AG04450 (cell line): ENCODE measurements at regions of chr2 and their contacts with region 1.

Region 1: DNA sequence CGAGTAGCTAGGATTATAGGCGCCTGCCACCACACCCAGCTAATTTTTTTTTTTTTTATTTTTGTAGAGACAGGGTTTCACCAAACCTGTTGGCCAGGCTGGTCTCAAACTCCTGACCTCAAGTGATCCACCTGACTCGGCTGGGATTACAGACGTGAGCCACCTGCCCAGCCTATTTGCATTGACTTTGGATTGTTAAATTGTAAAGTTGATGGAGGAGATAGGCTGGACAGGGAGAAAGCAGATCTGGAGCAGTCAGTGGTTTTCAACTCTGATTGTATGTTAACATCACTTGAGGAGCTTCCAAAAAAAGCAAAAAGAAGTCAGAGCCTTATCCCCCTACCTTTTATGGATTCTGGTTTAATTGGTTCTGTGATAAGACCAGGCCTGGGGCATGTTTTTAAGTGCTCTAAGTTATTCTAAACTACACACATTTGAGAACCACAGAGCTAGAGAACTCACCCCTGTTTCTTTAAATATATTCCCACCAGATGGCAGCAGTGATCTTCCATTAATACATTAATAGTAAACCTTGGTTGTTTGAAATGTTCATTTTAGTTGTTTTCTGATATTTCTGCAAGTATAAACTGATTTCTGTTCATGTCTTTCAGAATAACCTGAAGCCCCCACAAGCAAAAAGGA is 7.5 kb downstream of the C2orf49 start:
- DNase-seq: no peak
- H3K4me3 ChIP-seq: no peak overlapping the region
- H3K27ac ChIP-seq: no peak overlapping the region
- H3K27me3 ChIP-seq: no peaks in the 10 kb centered on the region
- CTCF ChIP-seq: peak; percentile 52

Region 2: GRCh38 chr2:105231232-105231619 is 113.6 kb before region 1 on chr2:
- CTCF ChIA-PET with region 1: no interaction called
- POLR2A ChIA-PET with region 1: no interaction called
- DNase-seq: no peak
- H3K4me3 ChIP-seq: no peak overlapping the region
- H3K27ac ChIP-seq: no peak overlapping the region
- H3K27me3 ChIP-seq: peaks cover 9% of the 10 kb centered on the region
- CTCF ChIP-seq: no peak

Region 3: GRCh38 chr2:105274046-105274445 is 70.8 kb before region 1 on chr2:
- CTCF ChIA-PET with region 1: no interaction called
- POLR2A ChIA-PET with region 1: no interaction called
- DNase-seq: no peak
- H3K4me3 ChIP-seq: no peak overlapping the region
- H3K27ac ChIP-seq: no peak overlapping the region
- H3K27me3 ChIP-seq: no peaks in the 10 kb centered on the region
- CTCF ChIP-seq: no peak

Region 4: DNA sequence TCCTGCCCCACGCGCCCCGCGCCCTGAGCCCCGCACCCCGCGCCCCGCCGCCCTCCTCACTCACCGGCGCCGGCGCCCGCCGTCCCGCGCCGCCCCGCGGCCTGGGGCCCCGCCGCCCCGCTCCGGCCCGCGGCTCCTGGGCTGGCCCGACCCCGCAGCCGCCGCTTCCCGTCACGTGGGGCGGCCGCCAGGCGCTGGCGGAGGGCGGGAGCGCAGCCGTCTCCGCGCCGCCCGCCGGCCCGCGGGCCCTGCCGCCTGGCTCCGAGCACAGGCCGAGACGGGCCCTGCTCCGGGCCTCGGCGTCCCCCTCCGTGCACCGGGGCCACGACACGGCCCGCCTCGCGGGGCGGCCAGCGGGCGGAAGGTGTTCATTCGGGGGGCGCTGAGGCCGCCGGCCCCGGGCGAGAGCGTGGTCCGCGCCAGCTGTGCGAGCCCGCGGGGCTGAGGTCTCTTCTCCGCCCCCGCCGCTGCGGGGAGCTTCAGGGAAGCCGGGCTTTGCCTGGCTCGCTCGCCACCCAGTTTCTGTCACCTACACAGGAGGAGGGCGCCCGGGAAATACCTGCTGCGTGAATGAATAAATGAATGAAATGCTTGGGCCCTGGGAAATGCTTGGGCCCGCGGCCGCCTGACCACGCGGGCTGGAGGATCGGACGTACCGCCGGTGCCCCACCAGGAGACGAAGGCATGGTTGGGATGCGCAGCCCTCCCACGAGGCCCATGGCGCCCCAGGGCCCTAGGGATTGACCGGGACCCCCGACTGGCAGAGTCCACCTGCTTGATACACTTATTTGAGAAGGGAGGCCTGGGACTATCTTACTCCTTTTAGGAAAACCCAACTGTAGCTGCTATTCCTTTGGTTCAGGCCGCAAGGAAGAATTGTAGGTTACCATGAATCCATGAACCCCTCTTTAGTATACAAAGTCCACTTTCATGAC is 15.0 kb before region 1 on chr2 and contains the start of gene TGFBRAP1:
- CTCF ChIA-PET with region 1: interaction called, 13 read pairs
- POLR2A ChIA-PET with region 1: no interaction called
- DNase-seq: no peak
- H3K4me3 ChIP-seq: peak within 1 kb of the TSS; percentile 84
- H3K27ac ChIP-seq: peak within 1 kb of the TSS; percentile 39
- H3K27me3 ChIP-seq: no peaks in the 10 kb centered on the region
- CTCF ChIP-seq: no peak
- polyA plus RNA-seq, gene TGFBRAP1: 7.9 and 9.8 TPM in 2 replicates

Region 5: GRCh38 chr2:105357122-105357521 is 12.3 kb after region 1 on chr2:
- CTCF ChIA-PET with region 1: interaction called, 16 read pairs
- POLR2A ChIA-PET with region 1: interaction called, 6 read pairs
- DNase-seq: no peak
- H3K4me3 ChIP-seq: no peak overlapping the region
- H3K27ac ChIP-seq: no peak overlapping the region
- H3K27me3 ChIP-seq: no peaks in the 10 kb centered on the region
- CTCF ChIP-seq: no peak

Region 6: GRCh38 chr2:105369747-105370690 is 25.2 kb after region 1 on chr2:
- CTCF ChIA-PET with region 1: interaction called, 13 read pairs
- POLR2A ChIA-PET with region 1: no interaction called
- DNase-seq: peak; percentile 63
- H3K4me3 ChIP-seq: no peak overlapping the region
- H3K27ac ChIP-seq: peak overlapping the region; percentile 47
- H3K27me3 ChIP-seq: no peaks in the 10 kb centered on the region
- CTCF ChIP-seq: peak; percentile 76

Region 7: GRCh38 chr2:105545730-105546627 is 201.2 kb after region 1 on chr2:
- CTCF ChIA-PET with region 1: interaction called, 25 read pairs
- POLR2A ChIA-PET with region 1: no interaction called
- DNase-seq: peak; percentile 29
- H3K4me3 ChIP-seq: no peak overlapping the region
- H3K27ac ChIP-seq: no peak overlapping the region
- H3K27me3 ChIP-seq: peaks cover 6% of the 10 kb centered on the region
- CTCF ChIP-seq: peak; percentile 94